Calu3 (cell line): ENCODE measurements at regions of chr3 and their contacts with region 1.

Region 1: DNA sequence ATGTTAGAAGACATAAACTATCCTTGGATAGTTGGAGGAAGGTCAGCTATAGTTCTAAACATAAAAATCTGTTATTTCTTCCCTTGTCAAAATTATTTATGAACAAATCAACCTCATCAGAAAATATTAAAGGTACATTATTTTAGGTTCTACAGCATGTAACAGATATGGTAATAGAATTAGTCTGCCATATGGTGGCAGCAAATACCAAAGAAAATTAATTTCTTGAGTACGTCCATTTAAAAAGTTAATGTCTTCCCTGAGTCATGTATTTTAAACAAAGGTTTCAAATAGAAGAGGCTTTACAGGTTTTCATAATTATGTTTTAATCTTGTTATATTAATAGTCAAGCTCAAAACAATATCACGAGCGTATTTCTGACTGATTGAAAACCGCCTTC is 17.9 kb upstream of the ANKRD28 start:
- DNase-seq: no peak
- H3K4me3 Mint-ChIP-seq: no peak overlapping the region
- H3K27ac Mint-ChIP-seq: no peak overlapping the region
- H3K4me1 Mint-ChIP-seq: peaks cover 17% of the 10 kb centered on the region
- H3K27me3 Mint-ChIP-seq: no peaks in the 10 kb centered on the region
- CTCF ChIP-seq: no peak

Region 2: GRCh38 chr3:14959359-14959943 is 856.2 kb before region 1 on chr3:
- CTCF ChIA-PET with region 1: no interaction called
- intact Hi-C with region 1: no loop called
- DNase-seq: no peak
- H3K4me3 Mint-ChIP-seq: no peak overlapping the region
- H3K27ac Mint-ChIP-seq: no peak overlapping the region
- H3K4me1 Mint-ChIP-seq: peaks cover 31% of the 10 kb centered on the region
- H3K27me3 Mint-ChIP-seq: no peaks in the 10 kb centered on the region
- CTCF ChIP-seq: no peak

Region 3: DNA sequence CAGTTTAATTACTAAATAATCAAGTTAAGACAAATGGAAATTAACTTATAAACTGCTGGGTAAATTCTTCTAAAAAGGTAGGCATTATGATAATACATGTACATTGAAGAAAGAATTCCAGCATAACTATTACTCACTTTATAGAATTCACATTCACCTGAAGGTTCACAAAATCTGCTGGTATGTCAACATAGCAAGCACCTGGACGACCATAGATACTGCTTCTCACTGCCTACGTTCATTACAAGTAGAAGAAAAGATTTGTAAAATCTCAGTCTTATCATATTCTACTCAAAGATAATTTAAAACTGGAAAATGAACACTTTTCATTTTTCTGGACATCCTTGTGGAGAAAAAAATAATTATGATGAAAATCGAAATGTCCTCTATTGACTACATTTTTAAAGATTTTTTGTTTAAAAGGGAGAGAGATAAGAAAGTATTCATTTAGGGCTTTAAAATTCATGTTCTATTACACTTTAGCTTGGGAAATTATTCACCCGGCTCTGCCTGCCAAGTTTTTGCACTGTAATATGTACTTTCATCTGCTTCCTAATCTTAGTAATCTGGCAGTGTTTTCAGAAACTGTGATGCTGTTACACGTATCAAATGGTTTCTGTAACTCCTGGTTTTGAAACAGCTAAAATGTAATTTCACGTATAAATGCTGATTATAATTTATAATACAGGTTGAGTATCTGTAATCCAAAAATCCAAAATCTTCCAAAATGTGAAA is 230.4 kb before region 1 on chr3:
- CTCF ChIA-PET with region 1: no interaction called
- intact Hi-C with region 1: no loop called
- DNase-seq: no peak
- H3K4me3 Mint-ChIP-seq: no peak overlapping the region
- H3K27ac Mint-ChIP-seq: no peak overlapping the region
- H3K4me1 Mint-ChIP-seq: no peaks in the 10 kb centered on the region
- H3K27me3 Mint-ChIP-seq: no peaks in the 10 kb centered on the region
- CTCF ChIP-seq: no peak

Region 4: DNA sequence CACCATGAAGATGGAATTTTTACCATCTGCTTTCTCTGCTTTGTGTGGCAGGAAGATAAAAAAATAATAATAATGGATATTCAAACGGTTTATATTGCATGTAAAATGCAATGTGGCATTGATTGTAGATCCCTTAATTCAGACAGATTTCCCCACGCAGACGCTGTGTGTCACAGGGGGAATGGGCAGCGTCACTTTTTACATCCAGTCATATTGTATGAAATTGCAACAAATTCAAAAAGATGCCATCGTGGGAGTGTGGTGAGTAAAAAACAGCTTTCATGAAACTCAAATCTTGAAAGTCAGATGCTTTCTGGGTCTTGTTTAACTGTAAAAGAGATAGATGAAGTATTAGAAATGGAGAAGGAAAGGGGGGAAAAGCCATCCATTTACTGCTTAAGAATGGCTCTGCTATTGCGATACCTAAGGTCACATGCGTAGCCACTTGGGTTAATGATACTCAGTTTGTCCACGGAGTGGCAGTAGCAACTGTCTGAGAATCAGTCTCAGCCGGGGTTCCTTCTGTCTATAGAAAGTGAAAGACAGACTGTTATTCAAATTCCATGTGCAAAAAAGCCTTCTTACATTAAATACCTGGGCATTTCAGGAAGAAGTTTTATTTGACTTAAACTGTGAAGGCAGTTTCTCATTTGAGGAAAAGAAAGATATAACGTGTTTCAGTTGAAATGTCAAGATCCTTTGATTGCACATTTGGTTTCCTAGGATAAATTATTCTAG is 185.7 kb before region 1 on chr3:
- CTCF ChIA-PET with region 1: no interaction called
- intact Hi-C with region 1: loop called (anchors 1 kb)
- DNase-seq: peak; percentile 58
- H3K4me3 Mint-ChIP-seq: no peak overlapping the region
- H3K27ac Mint-ChIP-seq: peak overlapping the region; percentile 34
- H3K4me1 Mint-ChIP-seq: peaks cover 9% of the 10 kb centered on the region
- H3K27me3 Mint-ChIP-seq: no peaks in the 10 kb centered on the region
- CTCF ChIP-seq: no peak

Region 5: DNA sequence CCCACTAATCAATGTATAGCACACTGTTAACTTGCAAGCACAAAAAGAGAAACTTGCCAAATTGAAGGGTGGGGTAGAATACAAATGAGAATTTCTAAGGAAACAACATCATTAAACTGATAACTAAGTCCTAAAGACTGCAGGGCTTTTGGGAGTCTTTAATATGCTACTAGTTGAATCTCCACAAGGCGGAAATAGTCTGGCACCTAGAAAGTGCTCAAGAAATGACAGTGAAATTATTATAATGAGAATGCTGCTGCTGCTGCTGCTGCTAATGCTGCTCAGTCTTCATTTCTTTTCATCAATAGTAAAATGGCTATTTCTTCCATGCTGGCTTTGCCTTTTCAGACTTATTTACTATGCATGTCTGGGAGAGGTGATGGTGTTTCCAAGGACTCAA is 122.3 kb before region 1 on chr3:
- CTCF ChIA-PET with region 1: no interaction called
- intact Hi-C with region 1: loop called (anchors 1 kb)
- DNase-seq: no peak
- H3K4me3 Mint-ChIP-seq: no peak overlapping the region
- H3K27ac Mint-ChIP-seq: no peak overlapping the region
- H3K4me1 Mint-ChIP-seq: no peaks in the 10 kb centered on the region
- H3K27me3 Mint-ChIP-seq: no peaks in the 10 kb centered on the region
- CTCF ChIP-seq: no peak

Region 6: GRCh38 chr3:16053794-16054193 is 238.1 kb after region 1 on chr3:
- CTCF ChIA-PET with region 1: no interaction called
- intact Hi-C with region 1: loop called (anchors 2 kb)
- DNase-seq: no peak
- H3K4me3 Mint-ChIP-seq: no peak overlapping the region
- H3K27ac Mint-ChIP-seq: no peak overlapping the region
- H3K4me1 Mint-ChIP-seq: peaks cover 12% of the 10 kb centered on the region
- H3K27me3 Mint-ChIP-seq: no peaks in the 10 kb centered on the region
- CTCF ChIP-seq: no peak